Activated T-helper 2 cell treated with anti-CD3 and anti-CD28 coated beads, Interferon-gamma antibody, Interleukin-2, Interleukin-4, amounts not matched to agents 10 μg/mL and 5 μg/mL and 100 μg/mL, durations not matched to agents 14 hours and 24 hours and 36 hours (primary cell): ENCODE measurements at regions of chr19 and their contacts with region 1.

Region 1: DNA sequence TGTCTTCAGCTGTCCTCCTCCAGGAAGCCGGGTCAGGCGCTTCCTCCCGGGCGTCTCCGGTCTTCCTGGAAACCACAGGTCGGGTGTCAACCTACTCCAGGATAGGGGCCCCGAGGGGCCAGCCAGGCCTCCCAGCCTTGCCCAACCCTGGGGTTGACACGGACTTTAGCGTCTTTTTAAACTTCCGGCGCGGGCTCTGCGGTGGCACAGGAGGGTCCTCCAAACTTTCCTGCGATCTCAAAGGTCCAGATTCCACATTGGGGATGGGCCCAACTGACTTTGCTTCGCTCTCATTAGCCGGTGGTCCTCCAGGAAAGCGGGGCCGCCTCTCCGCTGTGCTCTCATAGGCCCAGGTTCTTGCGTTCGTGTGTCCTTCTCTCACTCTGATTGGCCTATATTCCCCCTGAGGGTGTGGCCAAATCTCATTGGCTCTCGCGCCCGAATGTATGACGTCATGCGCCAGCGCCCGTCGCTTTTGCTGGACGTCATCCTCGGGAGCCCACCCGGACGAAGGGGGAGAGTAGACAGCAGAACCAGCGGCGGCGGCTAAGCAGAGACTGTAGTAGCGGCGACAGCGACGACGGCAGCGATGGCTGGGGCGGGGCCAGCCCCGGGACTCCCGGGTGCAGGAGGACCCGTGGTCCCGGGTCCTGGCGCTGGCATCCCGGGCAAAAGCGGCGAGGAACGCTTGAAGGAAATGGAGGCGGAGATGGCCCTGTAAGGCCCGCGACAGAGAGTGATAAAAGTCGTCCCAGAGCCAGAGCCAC is at the start of gene RBM42:
- DNase-seq: peak; percentile 97
- H3K4me3 Mint-ChIP-seq: peak within 1 kb of the TSS; percentile 100
- H3K27ac Mint-ChIP-seq: peak within 1 kb of the TSS; percentile 99
- H3K4me1 Mint-ChIP-seq: peaks cover 14% of the 10 kb centered on the region
- H3K27me3 Mint-ChIP-seq: no peaks in the 10 kb centered on the region
- total RNA-seq, gene RBM42: 101 and 102 TPM in 2 replicates

Region 2: GRCh38 chr19:35612559-35613321 is 16.0 kb before region 1 on chr19 and contains the start of gene HAUS5:
- intact Hi-C with region 1: loop called (anchors 1 kb)
- DNase-seq: peak; percentile 94
- H3K4me3 Mint-ChIP-seq: peak within 1 kb of the TSS; percentile 81
- H3K27ac Mint-ChIP-seq: peak within 1 kb of the TSS; percentile 83
- H3K4me1 Mint-ChIP-seq: peaks cover 20% of the 10 kb centered on the region
- H3K27me3 Mint-ChIP-seq: no peaks in the 10 kb centered on the region
- total RNA-seq, gene HAUS5: 42.5 and 43.1 TPM in 2 replicates

Region 3: DNA sequence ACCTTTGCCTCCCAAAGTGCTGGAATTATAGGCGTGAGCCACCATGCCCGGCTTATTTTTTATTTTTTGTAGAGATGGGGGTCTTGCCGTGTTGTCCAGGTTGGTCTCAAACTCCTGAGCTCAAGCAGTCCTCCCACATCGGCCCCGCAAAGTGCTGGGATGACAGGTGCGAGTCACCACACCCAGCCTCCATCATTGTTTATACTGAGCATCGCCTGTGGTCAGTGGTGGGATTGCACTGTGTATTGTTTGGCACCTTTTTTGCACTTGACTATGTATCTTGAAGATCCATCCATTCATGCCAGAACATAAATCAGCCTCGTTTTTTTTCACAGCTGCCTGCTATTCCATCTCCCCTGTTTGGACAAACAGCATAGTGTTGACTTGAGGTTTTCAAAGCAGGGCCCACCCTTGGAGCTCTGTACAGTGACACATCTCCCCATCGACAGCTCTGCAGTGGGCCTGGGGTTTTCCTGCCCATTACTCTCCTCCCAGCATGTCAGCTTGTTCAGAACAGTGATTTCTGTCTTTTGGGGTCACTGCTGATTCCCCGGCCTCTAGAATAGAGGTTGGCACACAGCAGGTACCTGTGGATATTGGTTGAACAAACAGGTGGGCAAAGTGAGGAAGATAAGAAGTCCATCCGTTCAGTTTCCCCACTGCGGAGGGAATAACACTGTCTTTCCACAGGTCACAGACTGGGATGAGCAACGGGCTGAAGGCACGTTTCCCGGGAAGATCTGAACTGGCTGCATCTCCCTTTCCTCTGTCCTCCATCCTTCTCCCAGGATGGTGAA is 29.4 kb after region 1 on chr19:
- intact Hi-C with region 1: no loop called
- DNase-seq: no peak
- H3K4me3 Mint-ChIP-seq: no peak overlapping the region
- H3K27ac Mint-ChIP-seq: no peak overlapping the region
- H3K4me1 Mint-ChIP-seq: no peaks in the 10 kb centered on the region
- H3K27me3 Mint-ChIP-seq: no peaks in the 10 kb centered on the region

Region 4: DNA sequence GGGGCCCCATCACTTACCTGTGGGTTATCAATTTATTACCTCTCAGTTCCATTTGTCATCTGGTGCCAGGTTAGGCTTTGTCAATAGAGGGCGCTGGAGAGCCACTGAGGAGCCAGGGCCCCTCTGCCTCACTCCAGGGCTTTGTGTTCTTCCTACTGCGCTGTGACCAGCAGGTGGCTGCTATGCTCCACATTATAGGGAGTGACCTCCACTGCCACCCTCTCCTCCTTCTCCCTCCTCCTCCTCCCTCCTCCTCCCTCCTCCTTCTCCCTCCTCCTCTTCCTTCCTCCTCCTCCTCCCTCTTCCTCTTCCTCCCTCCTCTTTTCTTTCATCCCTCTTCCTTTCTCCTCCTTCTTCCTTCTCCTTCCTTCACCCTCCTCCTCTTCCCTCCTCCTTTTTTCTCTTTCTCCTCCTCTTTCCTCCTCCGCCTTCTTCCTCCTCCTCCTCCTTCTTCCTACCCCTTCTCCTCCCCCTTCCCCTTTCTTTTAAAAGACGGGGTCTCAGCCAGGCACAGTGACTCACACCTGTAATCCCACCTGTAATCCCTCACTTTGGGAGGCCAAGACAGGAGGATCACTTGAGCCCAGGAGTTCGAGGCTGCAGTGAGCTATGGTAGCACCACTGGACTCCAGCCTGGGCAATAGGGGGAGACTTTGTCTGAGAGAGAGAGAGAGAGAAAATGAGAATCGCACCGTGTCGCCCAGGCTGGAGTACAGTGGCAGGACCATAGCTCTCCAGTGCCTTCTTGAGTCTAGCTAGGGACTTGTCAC is 65.3 kb after region 1 on chr19:
- intact Hi-C with region 1: no loop called
- DNase-seq: peak; percentile 85
- H3K4me3 Mint-ChIP-seq: no peak overlapping the region
- H3K27ac Mint-ChIP-seq: peak overlapping the region; percentile 35
- H3K4me1 Mint-ChIP-seq: peaks cover 13% of the 10 kb centered on the region
- H3K27me3 Mint-ChIP-seq: no peaks in the 10 kb centered on the region

Region 5: GRCh38 chr19:35882114-35882832 is 253.5 kb after region 1 on chr19:
- intact Hi-C with region 1: no loop called
- DNase-seq: no peak
- H3K4me3 Mint-ChIP-seq: no peak overlapping the region
- H3K27ac Mint-ChIP-seq: no peak overlapping the region
- H3K4me1 Mint-ChIP-seq: peaks cover 5% of the 10 kb centered on the region
- H3K27me3 Mint-ChIP-seq: peaks cover 7% of the 10 kb centered on the region